Naive thymus-derived CD8-positive, alpha-beta T cell (primary cell): ENCODE measurements at regions of chr1 and their contacts with region 1.

Region 1: GRCh38 chr1:23559136-23559984 is at the start of gene ID3:
- DNase-seq: peak; percentile 79 to 93 (median 86)
- ATAC-seq: peak; percentile 52 to 61
- H3K4me3 Mint-ChIP-seq: peak within 1 kb of the TSS; percentile 85 to 97 (median 94)
- H3K27ac Mint-ChIP-seq: peak within 1 kb of the TSS; percentile 81 to 97 (median 95)
- H3K4me1 Mint-ChIP-seq: peaks cover 45 to 80% (median 69%) of the 10 kb centered on the region in 4 donors
- H3K27me3 Mint-ChIP-seq: no peaks in the 10 kb centered on the region
- polyA plus RNA-seq, gene ID3: 2.7 to 10.0 (median 4.6) TPM

Region 2: GRCh38 chr1:23403735-23404486 is 155.4 kb before region 1 on chr1:
- POLR2A ChIA-PET with region 1: no interaction called
- DNase-seq: peak; percentile 64 to 86 (median 78)
- ATAC-seq: peak; percentile 97 to 98
- H3K4me3 Mint-ChIP-seq: no peak overlapping the region
- H3K27ac Mint-ChIP-seq: peak overlapping the region in 5 of 10 donors; percentile 11 to 72 (median 16)
- H3K4me1 Mint-ChIP-seq: peaks cover 9 to 12% (median 10%) of the 10 kb centered on the region in 4 donors
- H3K27me3 Mint-ChIP-seq: no peaks in the 10 kb centered on the region

Region 3: GRCh38 chr1:23539698-23540266 is 19.6 kb before region 1 on chr1:
- POLR2A ChIA-PET with region 1: interaction called, 41 read pairs
- DNase-seq: peak; percentile 73 to 94 (median 92)
- ATAC-seq: peak; percentile 95 to 96
- H3K4me3 Mint-ChIP-seq: peak overlapping the region; percentile 28 to 74 (median 49)
- H3K27ac Mint-ChIP-seq: peak overlapping the region in 9 of 10 donors; percentile 12 to 87 (median 74)
- H3K4me1 Mint-ChIP-seq: peaks cover 9 to 23% (median 14%) of the 10 kb centered on the region in 4 donors
- H3K27me3 Mint-ChIP-seq: no peaks in the 10 kb centered on the region

Region 4: GRCh38 chr1:23577056-23578004 is 18.0 kb after region 1 on chr1:
- POLR2A ChIA-PET with region 1: interaction called, 65 read pairs
- DNase-seq: no peak
- ATAC-seq: peak; percentile 68 to 78
- H3K4me3 Mint-ChIP-seq: peak overlapping the region; percentile 21 to 65 (median 58)
- H3K27ac Mint-ChIP-seq: peak overlapping the region; percentile 70 to 94 (median 86)
- H3K4me1 Mint-ChIP-seq: peaks cover 28 to 74% (median 69%) of the 10 kb centered on the region in 4 donors
- H3K27me3 Mint-ChIP-seq: no peaks in the 10 kb centered on the region

Region 5: DNA sequence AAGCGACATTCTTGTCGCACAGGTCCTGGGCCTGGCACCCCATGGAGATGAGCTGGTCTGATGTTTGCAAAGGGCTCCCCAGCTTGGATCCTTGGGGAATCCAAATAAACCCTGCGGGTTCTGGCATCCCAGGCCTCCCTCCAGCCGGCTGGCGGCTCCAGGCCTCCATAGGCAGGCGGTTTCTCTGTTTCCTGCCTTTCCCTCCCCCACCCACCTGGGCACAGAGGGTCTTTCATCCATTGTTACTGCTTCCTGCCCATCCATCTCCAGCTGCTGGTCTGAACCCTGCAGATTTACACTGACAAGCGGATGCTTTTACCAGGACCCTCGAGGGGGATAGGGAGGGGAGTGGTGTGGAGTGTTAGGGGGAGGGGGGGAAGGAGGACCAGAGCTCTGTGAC is 39.1 kb after region 1 on chr1:
- POLR2A ChIA-PET with region 1: interaction called, 359 read pairs
- DNase-seq: no peak
- ATAC-seq: no peak
- H3K4me3 Mint-ChIP-seq: peak overlapping the region in 3 of 10 donors; percentile 16 to 82 (median 67)
- H3K27ac Mint-ChIP-seq: peak overlapping the region in 7 of 10 donors; percentile 49 to 97 (median 85)
- H3K4me1 Mint-ChIP-seq: peaks cover 45 to 98% (median 95%) of the 10 kb centered on the region in 4 donors
- H3K27me3 Mint-ChIP-seq: no peaks in the 10 kb centered on the region

Region 6: DNA sequence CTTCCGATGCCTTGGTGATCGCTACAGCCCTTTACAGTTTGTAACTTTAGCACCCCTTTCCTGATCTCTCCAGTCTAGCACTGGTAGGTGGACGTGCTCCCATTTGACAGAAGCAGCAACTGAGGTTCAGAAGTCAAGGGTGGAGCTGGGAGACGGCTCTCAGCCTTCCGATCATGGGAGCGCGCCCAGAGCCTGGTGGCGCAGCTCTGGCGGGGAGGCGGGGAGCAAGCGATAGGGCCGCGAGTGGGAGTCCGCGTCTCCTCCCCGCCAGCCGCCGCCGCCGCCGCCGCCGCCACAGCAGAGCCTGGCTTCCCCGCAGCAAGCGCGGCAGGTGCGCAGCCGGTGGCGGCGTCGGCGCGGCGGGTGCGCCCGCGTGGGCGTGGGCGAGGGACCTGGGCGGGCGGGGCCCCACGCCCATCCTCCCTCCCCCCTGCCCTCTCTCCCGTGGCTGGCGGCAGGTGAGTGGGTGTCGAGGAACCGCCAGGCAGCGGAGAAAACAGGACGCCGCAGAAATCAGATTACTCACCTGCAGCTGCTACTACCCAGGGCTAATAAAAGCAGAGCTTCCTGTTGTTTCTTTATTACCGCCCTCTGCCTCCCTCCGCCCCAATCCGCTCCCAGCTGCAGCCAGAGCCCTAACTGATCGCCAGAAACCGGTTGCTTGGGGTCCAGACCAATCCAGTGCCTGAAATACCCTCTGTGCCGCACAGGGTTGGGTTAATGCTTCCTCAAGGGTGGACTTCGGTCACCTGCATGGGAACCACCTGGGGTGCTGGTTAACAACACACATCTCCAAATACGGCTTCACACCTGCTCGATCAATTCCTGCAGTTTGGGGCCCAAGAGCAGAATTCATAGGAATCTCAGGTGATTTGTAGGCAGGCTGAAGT is 60.2 kb after region 1 on chr1:
- POLR2A ChIA-PET with region 1: interaction called, 339 read pairs
- DNase-seq: peak; percentile 71 to 93 (median 82)
- ATAC-seq: peak; percentile 80 to 84
- H3K4me3 Mint-ChIP-seq: peak overlapping the region; percentile 68 to 87 (median 80)
- H3K27ac Mint-ChIP-seq: peak overlapping the region; percentile 94 to 100 (median 96)
- H3K4me1 Mint-ChIP-seq: peaks cover 58 to 92% (median 91%) of the 10 kb centered on the region in 4 donors
- H3K27me3 Mint-ChIP-seq: peaks cover 0 to 7% (median 0%) of the 10 kb centered on the region in 5 donors